ENCODE measurements at regions of chr4 and their contacts with region 1.

Region 1: GRCh38 chr4:78040431-78040830 is 16.7 kb upstream of the FRAS1 start:
- DNase-seq: no peak
- ATAC-seq: no peak
- H3K4me3 ChIP-seq: no peak overlapping the region
- H3K27ac ChIP-seq: no peak overlapping the region
- H3K4me1 ChIP-seq: no peaks in the 10 kb centered on the region
- H3K27me3 ChIP-seq: no peaks in the 10 kb centered on the region
- CTCF ChIP-seq: no peak
- POLR2A ChIP-seq: no peak

Region 2: DNA sequence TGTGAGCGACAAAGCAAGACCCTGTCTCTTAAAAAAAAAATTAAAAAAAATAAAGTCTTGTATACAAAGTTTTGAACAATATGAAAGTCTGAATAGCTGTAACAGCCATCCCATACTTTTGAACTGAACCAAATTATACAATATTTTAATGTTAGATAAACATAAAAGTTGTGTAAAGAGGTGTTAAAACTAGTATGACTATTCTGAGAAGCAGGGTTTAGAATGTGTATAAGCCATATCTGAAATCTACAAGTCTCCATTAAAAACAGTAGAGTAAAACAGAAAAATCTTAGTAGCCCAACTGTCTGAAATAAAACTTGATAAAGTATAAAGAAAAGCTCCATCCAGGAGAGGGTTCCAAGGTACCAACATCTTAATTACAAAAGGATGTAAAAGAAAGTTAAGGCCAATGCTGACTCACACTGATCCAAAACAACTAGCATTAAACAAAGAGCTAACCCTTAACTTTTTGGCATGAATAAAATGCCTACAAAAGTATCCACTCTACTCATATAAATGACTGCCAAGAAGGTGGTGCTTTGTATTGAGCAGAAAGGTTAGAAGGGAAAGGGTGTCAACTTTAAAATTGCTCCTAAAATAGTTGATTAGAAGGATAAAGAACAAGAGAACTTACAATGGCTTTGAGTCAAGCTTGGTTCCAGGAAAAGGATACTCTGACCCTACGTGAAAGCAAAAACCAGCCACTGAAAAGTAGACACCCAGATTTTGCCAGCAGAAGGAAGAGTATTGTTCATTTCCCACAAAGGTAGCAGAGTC is 239.8 kb before region 1 on chr4:
- intact Hi-C with region 1: no loop called
- DNase-seq: no peak
- ATAC-seq: peak; percentile 48 to 88 (median 76)
- H3K4me3 ChIP-seq: peak overlapping the region in 3 of 12 donors; percentile 10 to 12 (median 12)
- H3K27ac ChIP-seq: peak overlapping the region in 11 of 12 donors; percentile 20 to 68 (median 55)
- H3K4me1 ChIP-seq: peaks cover 0 to 62% (median 40%) of the 10 kb centered on the region in 12 donors
- H3K27me3 ChIP-seq: no peaks in the 10 kb centered on the region
- CTCF ChIP-seq: no peak
- POLR2A ChIP-seq: no peak

Region 3: GRCh38 chr4:78069859-78070258 is 29.4 kb after region 1 on chr4:
- intact Hi-C with region 1: loop called in 1 of 10 experiments (anchors 2 kb)
- DNase-seq: no peak
- ATAC-seq: no peak
- H3K4me3 ChIP-seq: no peak overlapping the region
- H3K27ac ChIP-seq: no peak overlapping the region
- H3K4me1 ChIP-seq: no peaks in the 10 kb centered on the region
- H3K27me3 ChIP-seq: no peaks in the 10 kb centered on the region
- CTCF ChIP-seq: no peak
- POLR2A ChIP-seq: no peak